ENCODE measurements at regions of chr16 and their contacts with region 1.

Region 1: GRCh38 chr16:67017810-67018488 is 11.0 kb upstream of the CBFB start:
- DNase-seq: peak; percentile 94 to 96 (median 96)
- H3K4me3 ChIP-seq: no peak overlapping the region
- H3K27ac ChIP-seq: no peak overlapping the region
- H3K4me1 ChIP-seq: peaks cover 0 to 18% (median 15%) of the 10 kb centered on the region in 4 experiments
- H3K27me3 ChIP-seq: peaks cover 0 to 15% (median 12%) of the 10 kb centered on the region in 5 experiments

Region 2: DNA sequence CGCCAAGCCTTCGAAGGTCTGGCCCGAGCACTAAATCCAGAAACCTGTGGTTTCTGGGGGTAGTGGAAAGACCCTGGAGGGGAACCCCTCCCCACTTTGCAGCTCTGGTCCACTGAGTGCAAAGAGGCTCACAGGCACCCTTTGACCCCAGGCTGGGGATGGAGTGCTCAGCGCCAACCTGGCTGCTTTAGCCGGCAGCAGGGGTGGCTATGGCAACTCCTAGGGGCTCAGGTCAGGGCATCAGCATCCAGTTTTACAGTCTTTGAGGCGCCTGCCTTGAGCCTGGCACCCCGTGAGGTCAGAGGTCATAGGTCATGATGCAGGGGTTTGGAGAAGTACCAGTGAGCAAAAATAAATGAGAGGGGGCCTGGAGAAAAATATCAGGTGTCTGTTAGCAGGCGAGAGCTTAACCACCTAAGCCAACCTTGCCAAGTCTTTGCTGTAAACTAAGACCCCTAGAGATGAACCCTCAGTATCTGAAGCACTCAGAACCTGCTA is 155.9 kb before region 1 on chr16:
- CTCF ChIA-PET with region 1: no interaction called
- POLR2A ChIA-PET with region 1: no interaction called
- DNase-seq: no peak
- H3K4me3 ChIP-seq: no peak overlapping the region
- H3K27ac ChIP-seq: no peak overlapping the region
- H3K4me1 ChIP-seq: peaks cover 0 to 3% (median under 1%) of the 10 kb centered on the region in 4 experiments
- H3K27me3 ChIP-seq: no peaks in the 10 kb centered on the region

Region 3: DNA sequence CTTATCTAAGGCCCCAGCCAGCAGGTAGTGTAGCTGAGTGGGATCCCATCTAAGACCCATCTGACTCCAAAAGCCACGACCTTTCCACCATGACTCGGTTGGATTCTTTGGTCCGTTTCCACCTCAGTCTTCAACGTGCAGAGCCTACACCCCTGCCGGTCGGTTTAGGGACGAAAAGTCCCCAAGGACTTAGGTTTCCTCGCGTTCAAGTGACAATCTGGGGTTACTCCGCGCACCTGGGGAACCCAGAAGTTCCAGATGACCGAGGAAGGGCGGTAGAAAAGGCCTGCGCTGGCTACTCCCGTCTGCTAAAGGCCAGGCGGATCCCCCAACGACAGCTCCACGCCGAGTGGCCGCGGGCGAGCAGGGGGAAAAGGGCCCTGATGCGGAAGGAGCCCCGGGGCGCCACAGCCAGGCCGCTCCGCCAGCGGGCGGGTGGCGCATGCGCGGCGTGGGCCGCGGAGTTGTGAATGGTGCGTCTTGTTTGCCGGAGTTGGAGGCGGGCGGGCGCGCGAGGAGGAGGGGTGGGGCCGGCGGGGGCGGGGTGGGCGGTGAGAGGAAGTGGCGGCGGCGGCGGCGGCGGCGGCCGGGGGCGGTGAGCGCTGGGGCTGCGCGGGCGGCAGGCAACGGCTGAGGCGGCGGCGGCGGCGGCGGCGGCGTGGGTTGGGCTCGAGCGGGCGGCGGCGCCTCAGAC is 10.8 kb after region 1 on chr16 and contains the start of gene CBFB:
- CTCF ChIA-PET with region 1: interaction called, 33 read pairs
- POLR2A ChIA-PET with region 1: interaction called, 10 read pairs
- DNase-seq: peak; percentile 94 to 96 (median 96)
- H3K4me3 ChIP-seq: peak within 1 kb of the TSS; percentile 77 to 98 (median 88)
- H3K27ac ChIP-seq: peak within 1 kb of the TSS; percentile 90 to 96
- H3K4me1 ChIP-seq: peaks cover 16 to 33% (median 29%) of the 10 kb centered on the region in 4 experiments
- H3K27me3 ChIP-seq: no peaks in the 10 kb centered on the region

Region 4: DNA sequence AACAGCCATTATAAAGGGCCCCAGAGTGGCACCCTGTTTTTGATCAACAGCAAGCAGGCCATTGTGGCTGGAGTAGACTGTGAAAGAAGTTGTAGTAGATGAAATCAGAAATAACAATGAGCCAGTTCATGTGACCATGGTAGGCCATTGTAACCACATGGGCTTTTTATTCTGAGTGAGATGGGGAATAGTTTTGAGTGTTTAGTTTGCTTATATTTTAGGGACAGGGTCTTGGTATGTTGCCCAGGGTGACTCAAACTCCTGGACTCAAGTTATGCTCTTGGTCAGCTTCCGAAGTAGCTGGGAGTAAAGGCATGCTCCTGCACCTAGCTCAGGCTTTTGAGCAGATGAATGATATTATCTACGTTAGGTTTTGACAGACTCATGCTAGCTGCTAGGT is 23.0 kb after region 1 on chr16:
- CTCF ChIA-PET with region 1: interaction called, 10 read pairs
- POLR2A ChIA-PET with region 1: no interaction called
- DNase-seq: no peak
- H3K4me3 ChIP-seq: no peak overlapping the region
- H3K27ac ChIP-seq: no peak overlapping the region
- H3K4me1 ChIP-seq: peaks cover 0 to 1% (median 0%) of the 10 kb centered on the region in 4 experiments
- H3K27me3 ChIP-seq: no peaks in the 10 kb centered on the region

Region 5: GRCh38 chr16:67068212-67068753 is 50.3 kb after region 1 on chr16:
- CTCF ChIA-PET with region 1: interaction called, 12 read pairs
- POLR2A ChIA-PET with region 1: interaction called, 4 read pairs
- DNase-seq: no peak
- H3K4me3 ChIP-seq: no peak overlapping the region
- H3K27ac ChIP-seq: no peak overlapping the region
- H3K4me1 ChIP-seq: peaks cover 3 to 15% (median 7%) of the 10 kb centered on the region in 4 experiments
- H3K27me3 ChIP-seq: no peaks in the 10 kb centered on the region

Measured in common myeloid progenitor, CD34-positive (primary cell).